ENCODE measurements at regions of chr10 and their contacts with region 1.

Region 1: GRCh38 chr10:70931168-70931815 is 42.9 kb upstream of the PCBD1 start:
- DNase-seq: peak; percentile 70 to 73
- H3K4me3 ChIP-seq: no peak overlapping the region
- H3K27ac ChIP-seq: no peak overlapping the region
- H3K4me1 ChIP-seq: peaks cover 14% of the 10 kb centered on the region
- H3K27me3 ChIP-seq: peaks cover 12% of the 10 kb centered on the region
- CTCF ChIP-seq: no peak

Region 2: GRCh38 chr10:70976063-70976695 is 44.9 kb after region 1 on chr10:
- CTCF ChIA-PET with region 1: interaction called, 19 read pairs
- POLR2A ChIA-PET with region 1: no interaction called
- intact Hi-C with region 1: no loop called
- DNase-seq: no peak
- H3K4me3 ChIP-seq: no peak overlapping the region
- H3K27ac ChIP-seq: no peak overlapping the region
- H3K4me1 ChIP-seq: no peaks in the 10 kb centered on the region
- H3K27me3 ChIP-seq: peaks cover 79% of the 10 kb centered on the region
- CTCF ChIP-seq: no peak

Region 3: DNA sequence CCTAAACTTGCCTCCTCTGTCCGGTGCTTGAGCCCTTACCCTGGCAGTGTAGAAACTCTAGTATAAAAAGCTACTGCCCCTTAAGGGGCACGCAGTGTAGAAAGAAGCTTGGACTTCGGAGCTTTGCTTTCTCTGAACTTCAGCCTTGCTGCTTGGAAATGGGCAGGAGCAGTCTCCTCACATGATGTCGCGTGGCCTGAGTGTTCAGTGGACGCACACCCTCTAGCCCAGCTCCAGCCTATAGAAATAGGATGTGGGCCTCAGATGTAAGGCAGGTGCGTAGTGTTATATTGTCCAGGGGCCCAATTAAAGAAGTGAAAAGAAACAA is 55.3 kb after region 1 on chr10:
- CTCF ChIA-PET with region 1: no interaction called
- POLR2A ChIA-PET with region 1: no interaction called
- intact Hi-C with region 1: no loop called
- DNase-seq: no peak
- H3K4me3 ChIP-seq: no peak overlapping the region
- H3K27ac ChIP-seq: no peak overlapping the region
- H3K4me1 ChIP-seq: no peaks in the 10 kb centered on the region
- H3K27me3 ChIP-seq: peaks cover 37% of the 10 kb centered on the region
- CTCF ChIP-seq: no peak

Region 4: GRCh38 chr10:71319042-71319799 is 387.9 kb after region 1 on chr10 and contains the start of gene SLC29A3:
- CTCF ChIA-PET with region 1: no interaction called
- POLR2A ChIA-PET with region 1: no interaction called
- intact Hi-C with region 1: no loop called
- DNase-seq: peak; percentile 68 to 83
- H3K4me3 ChIP-seq: peak within 1 kb of the TSS; percentile 65
- H3K27ac ChIP-seq: no peak within 1 kb of the TSS
- H3K4me1 ChIP-seq: peaks cover 19% of the 10 kb centered on the region
- H3K27me3 ChIP-seq: no peaks in the 10 kb centered on the region
- CTCF ChIP-seq: peak; percentile 84
- total RNA-seq, gene SLC29A3: 24.1 and 35.7 TPM in 2 replicates